Transverse colon (tissue), 4 donors: ENCODE measurements at regions of chr20 and their contacts with region 1.

Region 1: GRCh38 chr20:34069341-34070078 is 42.5 kb downstream of the EIF2S2 start:
- DNase-seq: peak; percentile 83
- H3K4me3 ChIP-seq: no peak overlapping the region
- H3K27ac ChIP-seq: peak overlapping the region; percentile 54 to 68 (median 58)
- H3K4me1 ChIP-seq: peaks cover 6 to 37% (median 10%) of the 10 kb centered on the region in 4 donors
- H3K27me3 ChIP-seq: no peaks in the 10 kb centered on the region
- CTCF ChIP-seq: peak; percentile 78 to 92 (median 85)
- EP300 ChIP-seq: no peak
- POLR2A ChIP-seq: no peak

Region 2: DNA sequence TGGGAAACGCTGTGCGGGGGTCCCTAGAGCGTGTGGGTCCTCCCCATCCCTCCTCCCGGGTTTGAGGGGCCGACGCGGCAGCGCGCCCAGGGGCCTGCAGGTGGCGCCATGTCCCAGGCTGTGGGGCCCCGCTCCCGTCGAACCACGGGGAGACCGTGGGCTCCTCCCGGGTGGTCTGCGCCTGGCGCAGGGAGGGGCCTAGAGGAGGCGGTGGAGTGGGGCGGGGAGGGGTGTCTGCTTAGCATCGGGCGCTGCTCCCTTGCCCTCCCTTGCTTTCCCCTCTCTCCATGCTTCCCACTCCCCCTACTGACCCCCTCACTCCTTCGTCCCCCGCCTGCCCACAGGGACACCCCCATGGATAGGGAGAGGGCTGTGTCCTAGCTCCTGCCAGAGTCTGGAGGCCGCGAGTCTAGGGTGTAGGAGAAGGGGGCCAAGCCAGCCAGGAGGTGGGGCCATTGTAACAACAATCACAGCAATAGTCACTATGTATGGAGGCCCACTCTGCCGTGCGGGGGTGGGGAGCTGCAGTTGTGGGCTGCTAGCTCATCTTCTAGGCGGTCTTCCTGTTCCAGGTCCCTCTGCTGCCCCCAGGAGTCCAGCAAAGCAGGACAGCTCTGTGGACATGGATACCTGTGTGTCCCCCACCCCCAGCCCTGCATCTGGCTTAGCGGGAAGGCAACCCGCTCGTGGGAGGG is 206.7 kb before region 1 on chr20:
- in situ Hi-C with region 1: loop called in 1 of 4 experiments (anchors 25 kb)
- intact Hi-C with region 1: loop called (anchors 2 kb)
- DNase-seq: peak; percentile 62
- H3K4me3 ChIP-seq: peak overlapping the region in 1 of 4 donors; percentile 12
- H3K27ac ChIP-seq: no peak overlapping the region
- H3K4me1 ChIP-seq: peaks cover 5 to 21% (median 6%) of the 10 kb centered on the region in 4 donors
- H3K27me3 ChIP-seq: no peaks in the 10 kb centered on the region
- CTCF ChIP-seq: peak; percentile 68 to 80 (median 72)
- EP300 ChIP-seq: no peak
- POLR2A ChIP-seq: no peak

Region 3: DNA sequence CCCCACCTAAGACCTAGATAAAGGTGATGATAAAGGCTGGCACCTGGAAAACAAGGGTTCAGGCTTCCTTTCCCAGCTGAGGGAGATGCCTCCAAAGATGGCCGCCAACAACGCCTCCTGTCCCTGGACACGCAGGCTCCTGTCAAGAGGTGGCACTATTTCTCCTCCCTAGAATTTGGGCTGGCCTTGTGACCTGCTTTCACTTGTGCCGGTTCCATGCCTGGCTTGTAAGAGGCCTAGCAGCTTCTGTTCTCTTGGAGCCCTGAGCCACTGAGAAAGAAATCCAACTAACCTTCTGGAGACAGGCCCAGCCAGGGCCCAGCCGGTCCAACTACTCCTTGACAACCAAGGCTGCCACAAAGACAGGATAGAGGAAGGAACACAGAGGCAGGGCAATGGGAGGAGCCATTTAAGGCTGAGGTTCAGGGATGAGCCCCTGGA is 136.0 kb before region 1 on chr20:
- in situ Hi-C with region 1: loop called (anchors 25 kb)
- intact Hi-C with region 1: loop called (anchors 5 kb)
- DNase-seq: peak; percentile 59
- H3K4me3 ChIP-seq: no peak overlapping the region
- H3K27ac ChIP-seq: peak overlapping the region in 2 of 4 donors; percentile 36 to 47
- H3K4me1 ChIP-seq: no peaks in the 10 kb centered on the region
- H3K27me3 ChIP-seq: no peaks in the 10 kb centered on the region
- CTCF ChIP-seq: peak; percentile 38 to 60 (median 44)
- EP300 ChIP-seq: no peak
- POLR2A ChIP-seq: no peak